Right ventricle myocardium inferior (tissue), 1 donor: ENCODE measurements at regions of chr9 and their contacts with region 1.

Region 1: DNA sequence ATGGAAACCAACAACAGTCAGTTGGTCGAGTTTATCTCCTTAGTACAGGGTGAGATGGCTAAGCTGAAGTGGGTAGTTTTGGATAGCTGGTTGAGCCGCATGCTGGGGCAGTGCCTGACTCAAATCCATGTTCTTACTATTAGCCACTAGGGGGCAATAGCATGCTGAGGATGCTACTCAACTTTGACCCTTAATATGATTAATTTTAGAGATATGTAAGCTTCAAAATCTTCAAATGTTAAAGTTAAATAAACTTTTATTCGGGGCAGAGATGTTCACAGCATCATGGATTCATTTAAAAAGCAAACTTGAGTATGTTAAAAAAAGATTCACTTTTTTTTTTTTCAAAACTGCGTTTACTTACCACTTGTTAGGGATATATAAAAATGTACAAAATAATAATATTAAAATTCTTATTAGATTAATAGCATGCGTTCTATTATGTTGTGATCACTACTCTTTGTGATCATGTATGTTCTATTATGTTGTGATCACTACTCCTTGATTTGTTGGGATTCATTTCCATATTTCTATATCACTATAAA is 57.0 kb downstream of the C9orf153 start:
- DNase-seq: no peak
- ATAC-seq: no peak

Region 2: DNA sequence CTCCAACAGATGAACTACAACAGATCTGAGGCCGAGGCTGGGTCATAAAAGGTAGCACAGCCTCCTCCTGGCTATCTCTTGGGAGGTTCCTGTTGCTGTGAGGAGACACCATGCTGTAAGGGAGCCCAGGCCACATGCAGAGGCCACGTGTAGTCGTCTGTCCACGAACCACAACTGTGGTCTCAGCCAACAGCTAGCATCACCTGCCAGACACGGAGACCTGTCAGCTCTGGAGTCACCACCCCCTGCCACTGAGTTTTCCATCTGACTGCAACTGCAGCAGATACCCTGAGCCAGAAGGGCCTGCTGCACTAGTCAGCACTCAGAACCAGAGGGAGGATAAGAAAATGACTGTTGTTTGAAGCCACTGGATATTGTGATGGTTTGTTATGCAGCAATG is 90.4 kb before region 1 on chr9:
- intact Hi-C with region 1: no loop called
- DNase-seq: no peak
- ATAC-seq: no peak

Region 3: GRCh38 chr9:86246752-86247161 is 44.3 kb after region 1 on chr9:
- intact Hi-C with region 1: loop called (anchors 2 kb)
- DNase-seq: no peak
- ATAC-seq: peak; percentile 75

Region 4: DNA sequence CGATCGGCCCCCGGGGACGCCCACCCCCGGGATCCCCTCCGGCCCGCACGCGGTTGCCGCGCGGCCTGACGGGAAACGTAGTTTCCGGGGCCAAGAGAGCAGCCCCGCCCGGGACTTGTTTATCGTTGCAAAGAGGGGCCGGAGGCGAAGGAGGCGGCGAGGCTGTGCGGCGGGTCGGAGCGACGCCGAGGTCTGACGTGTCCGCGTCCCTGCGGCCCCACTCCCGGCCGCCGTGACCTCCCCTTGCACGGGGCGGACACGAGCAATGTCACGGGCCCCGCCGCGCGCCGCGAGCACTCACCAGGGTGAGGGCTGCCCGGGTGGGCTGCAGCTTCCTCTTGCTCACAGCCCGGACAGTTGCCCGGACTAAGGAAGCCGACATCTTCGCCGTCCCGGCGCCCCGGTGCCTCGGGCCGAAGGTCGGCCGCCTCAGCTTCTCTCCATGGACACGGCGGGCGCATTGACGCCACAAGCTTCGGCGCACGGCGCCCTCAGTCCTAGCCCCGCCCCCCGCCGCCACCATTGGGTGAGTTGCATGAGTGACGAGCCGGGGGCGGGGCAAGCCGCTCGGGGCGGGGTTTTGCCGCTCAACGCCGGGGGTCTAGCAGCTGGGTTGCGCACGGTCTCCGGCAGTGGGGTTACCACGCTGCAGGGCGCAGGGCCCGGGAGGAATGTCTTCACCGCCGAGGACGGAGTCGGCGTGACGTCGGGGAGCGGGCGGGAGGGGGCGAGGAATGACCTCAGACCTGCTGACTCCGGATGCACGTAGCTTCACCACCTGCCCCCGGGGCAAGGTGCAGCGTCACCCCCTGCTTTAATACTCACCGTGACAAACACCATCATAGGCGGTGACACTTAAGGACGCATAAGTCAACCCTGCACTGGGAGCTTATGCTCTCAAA is 79.9 kb after region 1 on chr9 and contains the start of gene ISCA1:
- intact Hi-C with region 1: loop called (anchors 10 kb)
- DNase-seq: peak; percentile 99
- ATAC-seq: peak; percentile 97
- total RNA-seq, gene ISCA1: 66.5 TPM